GM12878 (cell line): ENCODE measurements at regions of chr4 and their contacts with region 1.

Region 1: DNA sequence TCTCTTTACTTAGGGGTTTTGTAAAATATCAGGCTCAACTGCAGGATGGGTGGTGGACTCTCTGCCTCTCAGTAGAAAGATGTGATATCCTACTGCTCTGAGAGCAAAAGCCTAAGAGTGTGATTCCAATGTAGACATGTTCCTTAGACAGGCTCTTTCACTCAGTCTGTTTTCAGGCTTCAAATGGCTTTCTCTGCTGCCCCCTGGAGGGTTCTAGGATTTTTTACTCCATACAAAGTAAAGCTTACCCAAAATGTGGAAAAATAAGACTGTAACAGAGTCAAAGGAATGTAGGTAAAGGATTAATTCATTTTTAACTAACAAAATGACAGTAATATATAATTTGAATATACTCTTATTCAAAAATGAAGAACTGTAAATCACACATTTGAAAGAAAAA is 32.1 kb downstream of the ZGRF1 start:
- DNase-seq: peak; percentile 3
- ATAC-seq: peak; percentile 92
- H3K4me3 ChIP-seq: no peak overlapping the region
- H3K27ac ChIP-seq: no peak overlapping the region
- H3K4me1 ChIP-seq: no peaks in the 10 kb centered on the region
- H3K27me3 ChIP-seq: no peaks in the 10 kb centered on the region
- CTCF ChIP-seq: peak; percentile 56 to 73 (median 65)
- EP300 ChIP-seq: no peak
- POLR2A ChIP-seq: no peak
- RAD21 ChIP-seq: peak; percentile 79

Region 2: DNA sequence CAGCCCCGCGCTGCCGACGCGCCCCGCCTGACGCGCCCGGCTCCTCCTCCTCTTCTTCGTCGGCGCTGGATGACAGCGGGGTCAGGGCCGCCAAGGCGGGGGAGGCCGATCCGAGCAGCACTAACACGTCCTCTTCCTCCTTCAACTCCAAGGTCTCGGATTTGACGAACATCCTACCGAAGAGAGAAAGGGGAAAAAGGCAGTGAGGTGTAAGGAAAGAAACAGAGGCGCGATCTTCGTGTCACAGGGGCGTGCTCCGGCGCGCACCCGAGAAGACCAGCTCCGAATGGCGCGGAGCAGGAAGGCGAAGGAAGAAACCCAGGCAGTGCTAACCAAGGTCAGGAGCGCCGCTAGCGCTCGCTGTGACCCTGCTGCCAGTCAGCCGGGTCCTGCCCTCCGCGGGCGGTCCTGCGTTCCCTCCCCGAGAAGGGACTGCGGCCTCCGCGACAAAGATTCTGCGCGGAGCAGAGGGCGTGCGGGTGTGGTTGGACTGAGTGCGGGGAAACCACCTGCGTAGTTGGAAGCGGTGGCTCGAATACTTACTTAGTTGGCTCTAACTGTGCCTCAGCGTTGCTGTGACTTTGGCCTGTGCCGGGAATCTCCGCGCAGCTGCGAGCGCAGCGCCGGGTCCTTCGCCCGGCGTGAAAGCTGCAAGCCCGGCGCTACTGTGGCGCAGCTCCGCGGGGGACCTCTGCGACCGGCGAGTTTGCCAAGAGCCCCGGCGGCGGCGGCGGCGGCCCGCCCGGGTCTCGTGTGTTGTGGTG is 89.1 kb before region 1 on chr4:
- CTCF ChIA-PET with region 1: no interaction called
- POLR2A ChIA-PET with region 1: no interaction called
- RAD21 ChIA-PET with region 1: no interaction called
- SMC1A ChIA-PET with region 1: interaction called, 13 read pairs
- in situ Hi-C with region 1: no loop called
- intact Hi-C with region 1: no loop called
- DNase-seq: no peak
- ATAC-seq: peak; percentile 65
- H3K4me3 ChIP-seq: peak overlapping the region; percentile 80
- H3K27ac ChIP-seq: peak overlapping the region; percentile 57
- H3K4me1 ChIP-seq: peaks cover 4% of the 10 kb centered on the region
- H3K27me3 ChIP-seq: peaks cover 5 to 14% of the 10 kb centered on the region in 2 experiments
- CTCF ChIP-seq: no peak
- EP300 ChIP-seq: no peak
- POLR2A ChIP-seq: peak; percentile 68
- RAD21 ChIP-seq: no peak

Region 3: GRCh38 chr4:112626228-112626627 is 21.6 kb after region 1 on chr4:
- CTCF ChIA-PET with region 1: no interaction called
- POLR2A ChIA-PET with region 1: no interaction called
- RAD21 ChIA-PET with region 1: no interaction called
- SMC1A ChIA-PET with region 1: no interaction called
- in situ Hi-C with region 1: no loop called
- intact Hi-C with region 1: no loop called
- DNase-seq: no peak
- ATAC-seq: no peak
- H3K4me3 ChIP-seq: no peak overlapping the region
- H3K27ac ChIP-seq: no peak overlapping the region
- H3K4me1 ChIP-seq: no peaks in the 10 kb centered on the region
- H3K27me3 ChIP-seq: no peaks in the 10 kb centered on the region
- CTCF ChIP-seq: no peak
- EP300 ChIP-seq: no peak
- POLR2A ChIP-seq: no peak
- RAD21 ChIP-seq: no peak

Region 4: DNA sequence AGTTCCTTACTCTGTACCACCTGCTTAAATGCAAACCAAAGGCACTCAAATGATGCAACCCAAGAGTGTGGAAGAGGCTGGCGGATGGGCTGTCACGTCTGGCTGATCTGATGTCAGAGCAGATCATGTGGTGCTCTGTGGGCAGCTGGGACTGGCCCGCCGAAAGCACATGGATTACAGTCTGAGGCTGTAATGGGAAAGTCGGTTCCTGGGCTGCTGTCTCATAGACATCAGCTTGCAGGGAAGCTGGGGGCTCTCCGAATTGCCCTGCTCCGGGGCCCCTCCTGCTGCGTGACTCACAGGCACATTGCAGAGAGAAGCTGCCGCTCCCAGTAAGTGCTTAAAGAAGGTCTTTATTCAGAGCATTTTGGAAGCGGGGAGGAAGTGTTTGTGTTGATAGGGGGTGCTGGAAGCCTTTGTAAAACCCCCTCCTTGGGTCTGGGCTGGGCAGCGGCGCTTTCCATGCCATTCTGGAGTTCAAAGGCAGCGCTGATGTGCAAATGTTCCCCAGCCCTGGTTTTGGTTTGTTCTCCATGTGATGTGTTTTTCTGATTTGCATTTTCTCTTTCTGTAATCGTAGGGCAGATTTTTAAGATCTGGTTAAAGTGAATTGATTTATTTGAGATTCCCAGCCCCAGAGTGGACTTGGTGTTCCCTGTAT is 213.5 kb after region 1 on chr4:
- CTCF ChIA-PET with region 1: no interaction called
- POLR2A ChIA-PET with region 1: no interaction called
- RAD21 ChIA-PET with region 1: no interaction called
- SMC1A ChIA-PET with region 1: no interaction called
- in situ Hi-C with region 1: no loop called
- intact Hi-C with region 1: no loop called
- DNase-seq: peak; percentile 55
- ATAC-seq: peak; percentile 96
- H3K4me3 ChIP-seq: peak overlapping the region; percentile 80
- H3K27ac ChIP-seq: peak overlapping the region; percentile 54
- H3K4me1 ChIP-seq: no peaks in the 10 kb centered on the region
- H3K27me3 ChIP-seq: no peaks in the 10 kb centered on the region
- CTCF ChIP-seq: peak in 1 of 3 experiments; percentile 32; a peak in 1 of 6 replicates
- EP300 ChIP-seq: 0 out of 4 replicates have a peak, but pooled peaks of 1 of the 2 experiments have one; percentile 6
- POLR2A ChIP-seq: peak; percentile 89
- RAD21 ChIP-seq: no peak; the same call in 1 of the 2 replicates